ENCODE measurements at regions of chr1 and their contacts with region 1.

Region 1: DNA sequence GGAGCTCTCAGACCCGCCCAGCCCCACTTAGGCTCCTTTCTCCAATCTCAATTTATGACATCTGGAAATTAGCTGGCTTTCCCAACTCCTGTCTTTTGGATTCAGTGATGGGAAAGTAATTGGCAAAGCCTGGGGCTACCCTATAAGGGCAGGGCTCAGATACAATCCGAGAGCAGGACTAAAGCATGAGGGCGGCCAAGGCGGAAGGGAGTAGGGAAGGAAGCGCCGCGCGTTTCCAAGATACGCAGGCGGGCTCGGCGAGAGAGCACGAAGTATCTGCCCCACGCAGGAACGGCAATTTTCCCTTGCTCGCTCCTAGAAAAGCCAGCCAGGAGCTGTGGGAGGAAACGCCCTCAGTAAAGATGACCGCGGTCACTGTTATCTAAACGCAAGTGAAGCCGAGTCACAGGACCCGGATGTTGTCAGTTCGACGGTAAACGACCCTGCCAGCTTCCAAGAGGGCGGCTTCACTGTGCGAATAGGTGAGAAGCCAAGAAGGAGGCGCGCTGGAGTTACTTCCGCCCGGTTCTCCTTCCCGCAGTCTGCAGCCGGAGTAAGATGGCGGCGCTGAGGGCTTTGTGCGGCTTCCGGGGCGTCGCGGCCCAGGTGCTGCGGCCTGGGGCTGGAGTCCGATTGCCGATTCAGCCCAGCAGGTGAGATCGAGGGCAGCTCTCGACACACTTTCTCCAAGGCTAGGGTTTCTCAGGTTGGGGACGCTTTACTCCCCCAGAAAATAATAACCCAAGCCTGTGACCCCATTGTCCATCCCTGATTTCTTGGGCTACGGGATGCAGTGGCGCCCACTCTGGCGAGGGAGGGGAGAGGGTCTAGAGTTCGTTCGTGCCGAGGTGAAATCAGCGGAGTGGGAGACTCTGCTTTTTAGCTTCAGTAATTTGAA is at the start of gene NDUFS2:
- DNase-seq: peak; percentile 99
- ATAC-seq: peak; percentile 97
- H3K4me3 Mint-ChIP-seq: peak within 1 kb of the TSS; percentile 89
- H3K27ac Mint-ChIP-seq: peak within 1 kb of the TSS; percentile 96
- H3K4me1 Mint-ChIP-seq: peaks cover 57% of the 10 kb centered on the region
- H3K27me3 Mint-ChIP-seq: no peaks in the 10 kb centered on the region
- CTCF ChIP-seq: no peak
- total RNA-seq, gene NDUFS2: 85.9 to 97.1 TPM

Region 2: GRCh38 chr1:161177112-161177935 is 24.8 kb before region 1 on chr1 and contains the start of gene B4GALT3:
- CTCF ChIA-PET with region 1: interaction called, 8 read pairs
- POLR2A ChIA-PET with region 1: interaction called, 13 read pairs
- intact Hi-C with region 1: no loop called
- DNase-seq: peak; percentile 96
- ATAC-seq: peak; percentile 85
- H3K4me3 Mint-ChIP-seq: peak within 1 kb of the TSS; percentile 97
- H3K27ac Mint-ChIP-seq: peak within 1 kb of the TSS; percentile 99
- H3K4me1 Mint-ChIP-seq: peaks cover 55% of the 10 kb centered on the region
- H3K27me3 Mint-ChIP-seq: no peaks in the 10 kb centered on the region
- CTCF ChIP-seq: no peak
- total RNA-seq, gene B4GALT3: 39.9 to 40.8 TPM

Region 3: DNA sequence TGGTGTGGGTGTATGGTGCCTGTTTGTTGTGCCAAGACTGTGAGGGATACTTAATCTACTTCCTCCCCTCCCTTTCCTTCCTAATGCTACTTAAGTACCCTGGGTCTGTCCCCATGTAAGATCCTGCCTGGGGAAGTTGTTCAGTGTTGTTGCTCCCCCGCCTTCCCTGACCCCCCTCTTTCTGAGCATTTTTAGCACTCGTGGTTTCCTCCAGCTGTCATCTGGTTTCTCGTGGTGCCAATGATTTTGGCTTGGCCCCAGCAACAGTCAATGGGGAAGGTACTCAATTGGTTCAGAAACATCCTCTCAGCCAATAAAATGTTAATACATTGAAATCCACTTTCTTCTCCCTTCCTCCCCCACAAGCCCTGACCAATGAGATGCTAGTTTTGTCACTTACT is 16.8 kb before region 1 on chr1:
- CTCF ChIA-PET with region 1: interaction called, 76 read pairs
- POLR2A ChIA-PET with region 1: interaction called, 13 read pairs
- intact Hi-C with region 1: no loop called
- DNase-seq: peak; percentile 89
- ATAC-seq: peak; percentile 74
- H3K4me3 Mint-ChIP-seq: peak overlapping the region; percentile 48
- H3K27ac Mint-ChIP-seq: peak overlapping the region; percentile 95
- H3K4me1 Mint-ChIP-seq: peaks cover 74% of the 10 kb centered on the region
- H3K27me3 Mint-ChIP-seq: no peaks in the 10 kb centered on the region
- CTCF ChIP-seq: no peak

Region 4: GRCh38 chr1:161216945-161217712 is 15.1 kb after region 1 on chr1:
- CTCF ChIA-PET with region 1: interaction called, 306 read pairs
- POLR2A ChIA-PET with region 1: interaction called, 82 read pairs
- intact Hi-C with region 1: no loop called
- DNase-seq: no peak
- ATAC-seq: peak; percentile 70
- H3K4me3 Mint-ChIP-seq: no peak overlapping the region
- H3K27ac Mint-ChIP-seq: peak overlapping the region; percentile 76
- H3K4me1 Mint-ChIP-seq: peaks cover 54% of the 10 kb centered on the region
- H3K27me3 Mint-ChIP-seq: no peaks in the 10 kb centered on the region
- CTCF ChIP-seq: no peak